Dendritic cell treated with granulocyte-macrophage colony-stimulating factor and Interleukin-4, amounts not matched to agents 40 ng/mL and 50 ng/mL, for 4 days (primary cell): ENCODE measurements at regions of chr19 and their contacts with region 1.

Region 1: DNA sequence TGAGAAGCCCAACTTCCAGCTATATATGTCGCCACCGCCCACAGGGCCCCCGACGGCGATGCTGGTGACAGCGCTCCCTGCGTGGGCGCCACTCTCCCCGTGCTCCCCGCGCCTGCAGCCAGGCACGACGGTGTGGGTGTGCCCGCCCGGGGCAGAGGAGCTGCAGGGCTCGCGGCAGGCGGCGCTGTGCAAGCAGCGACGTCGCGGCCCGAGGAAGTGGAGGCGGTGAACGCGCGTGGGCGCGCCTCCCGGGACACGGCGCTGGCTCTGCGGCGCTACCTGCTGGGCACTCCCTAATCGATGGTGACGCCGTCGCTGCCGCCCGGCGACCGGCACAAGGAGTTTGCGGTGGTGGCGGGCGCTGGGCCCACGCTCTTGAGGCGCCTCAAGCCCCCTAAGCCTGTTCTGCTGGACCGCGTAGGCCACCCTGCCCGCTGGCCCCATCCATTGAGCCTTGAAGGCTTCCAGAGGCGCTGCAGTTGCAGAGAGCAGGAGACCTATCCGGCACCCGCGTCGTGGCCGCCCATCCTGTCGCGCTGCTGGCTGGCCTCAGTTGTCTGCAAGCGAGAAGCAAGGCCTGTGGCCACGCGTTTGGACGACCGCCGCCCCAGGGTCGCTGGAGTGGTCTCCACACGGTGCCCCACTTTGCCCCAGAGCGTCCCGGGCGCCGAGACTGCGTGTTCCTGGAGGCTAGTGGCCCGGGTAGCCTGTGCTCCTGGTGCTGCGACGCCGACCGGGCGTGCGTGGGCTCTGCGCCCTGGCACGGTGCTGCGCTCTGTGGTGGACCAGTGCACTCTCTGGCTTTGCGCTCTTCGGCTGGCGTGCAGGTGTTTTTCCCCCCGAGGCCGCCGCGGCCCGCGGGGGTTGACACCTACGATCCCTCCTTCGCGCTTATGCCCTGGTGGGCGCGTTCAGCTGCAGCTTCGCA is 23.1 kb downstream of the LRFN3 start:
- H3K4me3 Mint-ChIP-seq: peak overlapping the region; percentile 37
- H3K27ac Mint-ChIP-seq: no peak overlapping the region
- H3K4me1 Mint-ChIP-seq: peaks cover 20% of the 10 kb centered on the region
- H3K27me3 Mint-ChIP-seq: peaks cover 52% of the 10 kb centered on the region

Region 2: DNA sequence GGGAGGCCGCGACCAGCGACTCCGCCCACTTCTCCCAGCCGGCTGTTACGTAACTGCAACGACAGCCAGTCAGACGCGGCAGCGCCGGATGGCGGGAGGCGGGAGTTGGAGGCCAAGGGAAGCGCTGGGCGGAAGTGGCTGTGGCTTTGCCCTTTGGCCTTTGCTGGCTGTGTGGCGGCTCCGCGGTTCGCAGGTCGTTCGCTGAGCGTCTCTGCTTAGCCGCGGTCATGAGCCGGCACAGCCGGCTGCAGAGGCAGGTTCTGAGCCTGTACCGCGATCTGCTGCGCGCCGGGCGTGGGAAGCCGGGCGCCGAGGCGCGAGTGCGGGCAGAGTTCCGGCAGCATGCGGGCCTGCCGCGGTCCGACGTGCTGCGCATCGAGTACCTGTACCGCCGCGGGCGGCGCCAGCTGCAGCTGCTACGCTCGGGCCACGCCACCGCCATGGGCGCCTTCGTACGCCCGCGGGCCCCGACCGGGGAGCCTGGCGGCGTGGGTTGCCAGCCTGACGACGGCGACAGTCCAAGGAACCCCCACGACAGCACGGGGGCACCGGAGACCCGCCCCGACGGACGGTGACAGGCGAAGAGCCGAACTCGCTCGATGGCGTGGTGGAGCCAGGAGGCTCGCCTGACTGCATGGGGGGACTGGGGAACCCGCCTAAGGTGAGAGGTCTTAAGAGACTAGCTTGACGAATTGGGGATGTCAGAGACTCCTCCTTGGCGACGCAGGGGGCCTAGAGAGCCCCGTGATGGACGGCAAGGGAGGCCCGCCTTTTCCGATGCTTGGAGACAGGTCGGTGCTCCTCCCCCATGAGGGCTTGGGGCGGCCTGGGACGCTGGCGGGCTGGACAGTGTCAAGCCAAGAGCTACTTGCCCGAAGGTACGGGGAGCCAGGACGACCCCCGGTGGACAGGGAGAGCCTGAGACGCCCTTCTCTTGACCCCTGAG is 36.0 kb after region 1 on chr19 and contains the start of gene SDHAF1:
- intact Hi-C with region 1: loop called (anchors 5 kb)
- H3K4me3 Mint-ChIP-seq: peak within 1 kb of the TSS; percentile 84
- H3K27ac Mint-ChIP-seq: peak within 1 kb of the TSS; percentile 86
- H3K4me1 Mint-ChIP-seq: peaks cover 52% of the 10 kb centered on the region
- H3K27me3 Mint-ChIP-seq: no peaks in the 10 kb centered on the region